Mucosa of descending colon (tissue), 3 donors: ENCODE measurements at regions of chr18 and their contacts with region 1.

Region 1: DNA sequence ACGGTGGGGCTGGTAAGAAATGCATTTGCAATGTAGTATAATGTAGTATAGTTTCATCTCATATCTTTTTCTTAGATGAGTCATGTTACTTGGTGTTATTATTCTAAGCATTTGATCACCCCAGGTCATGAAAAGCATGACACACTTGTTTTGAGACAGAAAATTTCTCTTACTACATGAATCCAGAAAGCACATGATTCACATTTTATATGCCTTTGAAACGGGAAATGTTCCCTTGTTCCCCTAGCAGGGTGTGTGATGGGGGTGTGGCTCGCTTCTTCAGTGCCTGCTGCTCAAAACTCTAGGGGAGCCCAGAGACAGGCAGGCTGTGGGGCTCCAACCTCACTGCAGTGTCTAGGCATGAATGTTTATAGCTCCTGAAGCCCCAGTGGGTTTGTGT is 116.0 kb upstream of the RAB27B start:
- DNase-seq: peak; percentile 42 to 64 (median 59)
- ATAC-seq: peak; percentile 91
- H3K4me3 ChIP-seq: no peak overlapping the region
- H3K4me1 ChIP-seq: no peaks in the 10 kb centered on the region
- CTCF ChIP-seq: no peak

Region 2: GRCh38 chr18:54224379-54225014 is 487.8 kb before region 1 on chr18 and contains the start of gene MBD2:
- intact Hi-C with region 1: no loop called
- DNase-seq: peak; percentile 96 to 98 (median 98)
- ATAC-seq: peak; percentile 99
- H3K4me3 ChIP-seq: peak within 1 kb of the TSS; percentile 77
- H3K4me1 ChIP-seq: peaks cover 33% of the 10 kb centered on the region
- CTCF ChIP-seq: no peak
- total RNA-seq, gene MBD2: 83.3 to 108 (median 106) TPM

Region 3: GRCh38 chr18:54766619-54767018 is 54.3 kb after region 1 on chr18:
- intact Hi-C with region 1: loop called in 1 of 2 experiments (anchors 5 kb)
- DNase-seq: no peak
- ATAC-seq: no peak
- H3K4me3 ChIP-seq: no peak overlapping the region
- H3K4me1 ChIP-seq: no peaks in the 10 kb centered on the region
- CTCF ChIP-seq: no peak

Region 4: GRCh38 chr18:54777118-54777791 is 64.9 kb after region 1 on chr18:
- intact Hi-C with region 1: no loop called
- DNase-seq: no peak
- ATAC-seq: peak; percentile 79
- H3K4me3 ChIP-seq: no peak overlapping the region
- H3K4me1 ChIP-seq: no peaks in the 10 kb centered on the region
- CTCF ChIP-seq: no peak